ENCODE measurements at regions of chr17 and their contacts with region 1.

Region 1: DNA sequence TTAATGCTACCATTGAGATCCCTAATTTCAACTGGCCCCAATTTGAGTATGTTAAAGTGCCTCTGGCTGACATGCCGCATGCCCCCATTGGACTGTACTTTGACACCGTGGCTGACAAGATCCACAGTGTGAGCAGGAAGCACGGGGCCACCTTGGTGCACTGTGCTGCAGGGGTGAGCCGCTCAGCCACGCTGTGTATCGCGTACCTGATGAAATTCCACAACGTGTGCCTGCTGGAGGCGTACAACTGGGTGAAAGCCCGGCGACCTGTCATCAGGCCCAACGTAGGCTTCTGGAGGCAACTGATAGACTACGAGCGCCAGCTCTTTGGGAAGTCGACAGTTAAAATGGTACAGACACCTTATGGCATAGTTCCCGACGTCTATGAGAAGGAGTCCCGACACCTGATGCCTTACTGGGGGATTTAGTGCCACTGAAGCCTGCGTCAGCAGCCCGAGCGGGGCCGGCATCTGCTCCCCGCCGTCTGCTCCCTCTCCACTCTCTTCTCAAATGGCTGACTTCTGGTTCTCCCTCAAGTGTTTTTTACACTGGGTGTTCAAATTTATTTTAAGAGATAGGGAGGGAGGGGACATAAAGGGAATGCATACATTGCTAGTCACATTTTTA is 22.9 kb downstream of the DUSP14 start:
- DNase-seq: no peak
- H3K4me3 ChIP-seq: no peak overlapping the region
- H3K27ac ChIP-seq: no peak overlapping the region
- H3K4me1 ChIP-seq: no peaks in the 10 kb centered on the region
- H3K27me3 ChIP-seq: no peaks in the 10 kb centered on the region
- CTCF ChIP-seq: no peak
- POLR2A ChIP-seq: no peak

Region 2: GRCh38 chr17:36601303-36602029 is 911.1 kb before region 1 on chr17 and contains the start of gene MRM1:
- intact Hi-C with region 1: loop called (anchors 5 kb)
- DNase-seq: peak; percentile 83 to 88
- H3K4me3 ChIP-seq: peak within 1 kb of the TSS; percentile 57 to 92 (median 88)
- H3K27ac ChIP-seq: peak within 1 kb of the TSS; percentile 72 to 86
- H3K4me1 ChIP-seq: peaks cover 3 to 7% of the 10 kb centered on the region in 2 donors
- H3K27me3 ChIP-seq: no peaks in the 10 kb centered on the region
- CTCF ChIP-seq: no peak
- POLR2A ChIP-seq: peak; percentile 56
- total RNA-seq, gene MRM1: 4.8 to 7.5 (median 7.2) TPM

Measured in breast epithelium (tissue), 4 donors.